Activated CD8-positive, alpha-beta T cell treated with anti-CD3 and anti-CD28 coated beads, Interleukin-2, amount 10 ng/mL, durations not matched to agents 7 days and 5 days (primary cell): ENCODE measurements at regions of chr7 and their contacts with region 1.

Region 1: GRCh38 chr7:142811154-142811737 is 40.5 kb downstream of the PRSS2 start:
- DNase-seq: peak; percentile 71
- ATAC-seq: no peak
- H3K4me3 Mint-ChIP-seq: peak overlapping the region; percentile 54
- H3K27ac Mint-ChIP-seq: peak overlapping the region; percentile 88
- H3K4me1 Mint-ChIP-seq: peaks cover 72% of the 10 kb centered on the region
- H3K27me3 Mint-ChIP-seq: peaks cover 2% of the 10 kb centered on the region

Region 2: GRCh38 chr7:142323706-142324105 is 487.5 kb before region 1 on chr7:
- CTCF ChIA-PET with region 1: interaction called, 17 read pairs
- POLR2A ChIA-PET with region 1: interaction called, 4 read pairs
- DNase-seq: peak; percentile 53
- ATAC-seq: peak; percentile 72
- H3K4me3 Mint-ChIP-seq: no peak overlapping the region
- H3K27ac Mint-ChIP-seq: peak overlapping the region; percentile 31
- H3K4me1 Mint-ChIP-seq: peaks cover 20% of the 10 kb centered on the region
- H3K27me3 Mint-ChIP-seq: peaks cover 22% of the 10 kb centered on the region

Region 3: GRCh38 chr7:142557971-142558582 is 253.2 kb before region 1 on chr7:
- CTCF ChIA-PET with region 1: interaction called, 4 read pairs
- POLR2A ChIA-PET with region 1: interaction called, 12 read pairs
- DNase-seq: peak; percentile 65
- ATAC-seq: peak; percentile 83
- H3K4me3 Mint-ChIP-seq: peak overlapping the region; percentile 4
- H3K27ac Mint-ChIP-seq: no peak overlapping the region
- H3K4me1 Mint-ChIP-seq: peaks cover 15% of the 10 kb centered on the region
- H3K27me3 Mint-ChIP-seq: peaks cover 9% of the 10 kb centered on the region

Region 4: GRCh38 chr7:142669074-142669654 is 142.1 kb before region 1 on chr7:
- CTCF ChIA-PET with region 1: interaction called, 14 read pairs
- POLR2A ChIA-PET with region 1: no interaction called
- DNase-seq: no peak
- ATAC-seq: no peak
- H3K4me3 Mint-ChIP-seq: no peak overlapping the region
- H3K27ac Mint-ChIP-seq: peak overlapping the region; percentile 74
- H3K4me1 Mint-ChIP-seq: peaks cover 34% of the 10 kb centered on the region
- H3K27me3 Mint-ChIP-seq: no peaks in the 10 kb centered on the region

Region 5: GRCh38 chr7:142771353-142771723 is 39.9 kb before region 1 on chr7:
- CTCF ChIA-PET with region 1: no interaction called
- POLR2A ChIA-PET with region 1: no interaction called
- DNase-seq: no peak
- ATAC-seq: no peak
- H3K4me3 Mint-ChIP-seq: no peak overlapping the region
- H3K27ac Mint-ChIP-seq: no peak overlapping the region
- H3K4me1 Mint-ChIP-seq: peaks cover 15% of the 10 kb centered on the region
- H3K27me3 Mint-ChIP-seq: peaks cover 8% of the 10 kb centered on the region

Region 6: DNA sequence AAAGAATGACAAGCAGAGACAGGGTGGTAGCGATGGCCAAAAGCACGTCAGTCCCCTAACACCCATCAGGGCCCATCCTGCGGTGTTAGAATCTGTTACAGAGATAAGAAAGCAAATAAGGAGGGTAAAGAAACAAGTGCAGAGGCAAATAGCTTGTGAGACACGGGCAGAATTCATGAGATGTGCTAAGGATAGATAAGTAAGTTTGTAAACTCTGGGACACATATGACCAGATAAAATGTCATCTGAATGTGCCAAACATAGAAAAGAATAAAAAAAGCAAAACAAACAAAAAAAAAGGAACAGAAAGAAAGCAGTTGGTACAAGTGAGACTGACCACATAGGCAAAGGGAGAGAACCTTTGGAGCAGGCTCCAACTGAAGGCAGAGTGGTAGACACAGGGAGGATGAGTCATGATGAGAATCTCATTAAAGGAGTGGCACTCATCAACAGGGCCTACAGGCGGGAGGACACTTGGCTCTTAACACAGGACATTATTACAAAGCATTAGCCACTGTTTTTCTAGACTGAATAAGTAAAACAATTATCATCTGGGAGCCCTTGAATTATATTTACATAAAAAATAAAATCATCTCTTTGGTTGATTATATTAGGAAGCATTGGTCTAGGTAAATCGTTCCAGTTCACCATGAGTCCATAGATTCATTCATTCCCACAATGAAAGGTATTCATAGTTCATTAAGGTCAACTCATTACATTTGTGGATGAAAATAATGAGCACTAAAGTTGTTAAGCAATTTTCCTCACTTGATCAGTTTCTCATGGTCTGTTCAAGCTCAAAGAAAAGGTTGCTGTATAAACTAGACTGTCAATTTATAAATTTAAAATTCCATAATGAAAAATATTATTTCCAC is 22.2 kb after region 1 on chr7:
- CTCF ChIA-PET with region 1: interaction called, 33 read pairs
- POLR2A ChIA-PET with region 1: interaction called, 9 read pairs
- DNase-seq: no peak
- ATAC-seq: no peak
- H3K4me3 Mint-ChIP-seq: no peak overlapping the region
- H3K27ac Mint-ChIP-seq: no peak overlapping the region
- H3K4me1 Mint-ChIP-seq: peaks cover 13% of the 10 kb centered on the region
- H3K27me3 Mint-ChIP-seq: peaks cover 7% of the 10 kb centered on the region